ENCODE measurements at regions of chr10 and their contacts with region 1.

Region 1: DNA sequence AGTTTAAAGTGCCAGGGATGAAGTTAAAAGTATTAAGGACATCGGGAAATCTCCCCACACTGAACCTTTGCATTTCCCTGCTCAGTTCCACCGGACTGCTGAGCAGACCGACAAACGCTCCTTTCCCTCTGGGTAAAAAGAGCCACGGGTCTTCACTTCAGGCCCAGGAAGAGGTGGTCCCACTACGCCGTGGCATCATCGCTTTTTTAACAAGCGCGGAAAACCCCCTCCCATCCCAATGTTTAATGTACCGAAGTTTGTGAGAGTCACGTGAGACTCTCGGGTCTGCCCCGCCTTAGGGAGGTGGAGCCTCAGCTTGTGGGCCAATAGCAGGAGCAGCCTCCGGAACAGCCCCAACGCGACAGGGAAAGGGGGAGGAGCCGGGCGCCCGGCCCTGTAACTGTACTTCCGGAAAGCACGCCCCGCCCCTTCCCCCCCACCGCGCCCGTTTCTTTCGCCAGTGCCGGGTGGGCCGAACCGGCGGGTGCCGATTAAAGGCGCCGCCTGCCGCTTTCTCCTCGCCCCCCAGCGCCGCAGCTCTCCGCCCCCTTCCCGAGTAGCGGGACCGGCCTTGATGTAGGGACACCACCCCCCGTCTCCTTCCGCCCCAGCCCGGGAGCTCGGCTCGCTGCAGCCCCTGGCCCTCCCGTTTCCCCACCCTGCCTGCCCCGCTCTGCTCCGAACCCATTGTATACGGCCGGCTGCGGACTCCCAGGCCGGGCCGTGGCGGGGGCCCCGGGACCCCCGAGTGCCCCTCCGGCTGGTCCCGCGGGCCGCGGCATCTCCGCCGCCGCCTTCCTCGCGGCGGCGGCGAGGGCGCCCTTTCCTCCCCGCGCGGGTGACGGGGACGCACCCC is 2.2 kb upstream of the TRIM8 start:
- DNase-seq: peak; percentile 94
- ATAC-seq: peak; percentile 70
- H3K4me3 ChIP-seq: peak overlapping the region; percentile 69 to 85 (median 82)
- H3K27ac ChIP-seq: peak overlapping the region; percentile 95
- H3K4me1 ChIP-seq: peaks cover 16% of the 10 kb centered on the region
- H3K27me3 ChIP-seq: no peaks in the 10 kb centered on the region; a peak in 1 of 5 replicates
- CTCF ChIP-seq: peak; percentile 33; the same call in 1 of the 2 replicates
- EP300 ChIP-seq: peak in 1 of 2 experiments; percentile 56; a peak in 1 of 4 replicates
- POLR2A ChIP-seq: peak in 1 of 2 experiments; percentile 51; a peak in 2 of 4 replicates
- RAD21 ChIP-seq: 0 out of 2 replicates have a peak, but pooled peaks have one; percentile 18

Region 2: GRCh38 chr10:102503281-102504220 is 138.6 kb before region 1 on chr10 and contains the start of gene SUFU:
- CTCF ChIA-PET with region 1: interaction called, 5 read pairs
- POLR2A ChIA-PET with region 1: interaction called, 22 read pairs
- in situ Hi-C with region 1: no loop called
- intact Hi-C with region 1: loop called (anchors 5 kb)
- DNase-seq: peak; percentile 98
- ATAC-seq: peak; percentile 72
- H3K4me3 ChIP-seq: peak within 1 kb of the TSS; percentile 92 to 97 (median 96)
- H3K27ac ChIP-seq: peak within 1 kb of the TSS; percentile 75
- H3K4me1 ChIP-seq: peaks cover 49% of the 10 kb centered on the region
- H3K27me3 ChIP-seq: no peaks in the 10 kb centered on the region; a peak in 1 of 5 replicates
- CTCF ChIP-seq: peak; percentile 94
- EP300 ChIP-seq: no peak
- POLR2A ChIP-seq: peak; percentile 55 to 94
- RAD21 ChIP-seq: peak; percentile 69
- total RNA-seq, gene SUFU: 2.9 and 4.0 TPM in 2 replicates

Region 3: DNA sequence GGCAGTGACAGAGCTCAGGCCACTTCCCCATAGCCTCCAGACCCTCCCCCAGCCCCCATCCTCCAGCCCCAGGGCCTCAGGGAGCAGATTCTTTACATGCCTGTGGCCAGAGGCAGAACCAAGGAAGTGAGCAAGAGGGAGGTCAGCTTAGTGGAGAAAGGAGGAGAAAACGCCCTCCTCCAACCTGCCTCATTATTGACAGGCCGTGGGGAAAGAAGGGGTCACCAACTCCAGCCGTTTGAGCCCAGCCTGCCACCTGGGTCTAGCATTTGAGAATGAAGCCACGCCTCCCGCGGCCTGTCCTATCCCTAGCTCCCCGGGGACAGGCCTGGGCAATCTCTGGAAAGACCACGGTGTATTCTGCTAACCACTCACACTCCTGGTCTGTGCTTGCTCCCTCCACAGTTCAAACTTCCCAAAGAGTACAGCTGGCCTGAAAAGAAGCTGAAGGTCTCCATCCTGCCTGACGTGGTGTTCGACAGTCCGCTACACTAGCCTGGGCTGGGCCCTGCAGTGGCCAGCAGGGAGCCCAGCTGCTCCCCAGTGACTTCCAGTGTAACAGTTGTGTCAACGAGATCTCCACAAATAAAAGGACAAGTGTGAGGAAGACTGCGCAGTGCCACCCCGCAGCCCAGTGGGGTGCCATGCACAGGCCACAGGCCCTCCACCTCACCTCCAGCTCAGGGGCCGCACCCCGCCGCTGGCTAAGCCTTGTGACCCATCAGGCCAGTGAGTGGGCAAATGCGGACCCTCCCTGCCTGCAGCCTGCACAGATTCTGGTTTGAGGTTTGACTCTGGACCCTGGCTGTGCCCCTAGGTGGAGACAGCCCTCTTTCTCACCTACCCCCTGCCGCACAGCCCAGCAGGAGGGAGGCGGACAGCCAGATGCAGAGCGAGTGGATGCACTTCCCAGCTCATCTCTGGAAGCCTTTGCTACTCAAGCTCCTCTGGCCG is 12.2 kb before region 1 on chr10:
- CTCF ChIA-PET with region 1: no interaction called
- POLR2A ChIA-PET with region 1: interaction called, 121 read pairs
- in situ Hi-C with region 1: no loop called
- intact Hi-C with region 1: loop called (anchors 1 kb)
- DNase-seq: peak; percentile 60
- ATAC-seq: peak; percentile 64
- H3K4me3 ChIP-seq: no peak overlapping the region
- H3K27ac ChIP-seq: peak overlapping the region; percentile 53
- H3K4me1 ChIP-seq: peaks cover 86% of the 10 kb centered on the region
- H3K27me3 ChIP-seq: no peaks in the 10 kb centered on the region
- CTCF ChIP-seq: no peak
- EP300 ChIP-seq: peak in 1 of 2 experiments; percentile 18; a peak in 1 of 4 replicates
- POLR2A ChIP-seq: no peak
- RAD21 ChIP-seq: no peak

Region 4: GRCh38 chr10:102669206-102670064 is 27.3 kb after region 1 on chr10:
- CTCF ChIA-PET with region 1: no interaction called
- POLR2A ChIA-PET with region 1: interaction called, 17 read pairs
- in situ Hi-C with region 1: no loop called
- intact Hi-C with region 1: no loop called
- DNase-seq: peak; percentile 64
- ATAC-seq: peak; percentile 71
- H3K4me3 ChIP-seq: peak overlapping the region; percentile 35 to 62 (median 36); a peak in 4 of 6 replicates
- H3K27ac ChIP-seq: no peak overlapping the region
- H3K4me1 ChIP-seq: peaks cover 100% of the 10 kb centered on the region
- H3K27me3 ChIP-seq: no peaks in the 10 kb centered on the region
- CTCF ChIP-seq: peak; percentile 70
- EP300 ChIP-seq: no peak
- POLR2A ChIP-seq: no peak
- RAD21 ChIP-seq: peak; percentile 42; the same call in 1 of the 2 replicates

Region 5: DNA sequence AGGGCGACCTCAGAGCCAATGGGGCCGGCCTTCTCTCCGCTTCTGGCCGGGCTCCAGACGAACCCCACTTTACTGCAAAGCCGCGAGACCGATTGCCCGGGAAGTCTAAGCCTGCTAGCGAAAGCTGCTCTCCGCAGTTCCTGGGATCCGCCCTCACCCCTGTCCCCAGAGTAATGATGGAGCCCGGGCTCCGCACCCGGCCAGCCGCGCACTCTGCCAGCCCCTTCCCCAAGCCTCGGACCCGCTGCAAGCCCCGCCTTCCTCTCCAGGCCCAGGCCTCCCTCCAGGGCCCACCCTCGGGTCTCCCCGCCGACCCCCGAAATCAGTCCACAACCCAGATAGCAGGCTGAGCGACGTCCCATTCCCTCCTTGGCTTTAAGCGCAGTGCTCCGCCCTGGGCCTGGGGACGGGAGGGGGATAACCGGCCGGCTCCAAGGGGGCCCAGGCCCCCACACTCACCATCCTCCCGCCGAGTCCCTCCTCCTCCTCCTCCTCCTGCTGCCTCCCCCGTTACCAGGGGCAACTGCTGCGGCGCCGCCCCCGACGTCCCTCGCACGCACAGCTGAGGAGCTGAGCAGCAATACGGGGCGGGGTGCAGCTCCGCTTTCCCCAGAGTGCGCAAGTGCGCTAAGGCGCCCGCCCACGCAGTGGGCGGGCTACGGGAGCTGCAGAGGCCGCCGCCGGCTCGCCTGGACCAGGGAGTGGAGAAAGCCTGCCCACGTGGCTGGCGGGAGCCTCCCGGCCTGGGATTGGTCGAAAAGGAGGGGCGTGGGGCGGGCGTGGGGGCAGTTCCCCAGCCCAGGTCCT is 71.9 kb after region 1 on chr10 and contains the start of gene ARL3:
- CTCF ChIA-PET with region 1: no interaction called
- POLR2A ChIA-PET with region 1: interaction called, 21 read pairs
- in situ Hi-C with region 1: no loop called
- intact Hi-C with region 1: loop called (anchors 2 kb)
- DNase-seq: peak; percentile 95
- ATAC-seq: peak; percentile 92
- H3K4me3 ChIP-seq: peak within 1 kb of the TSS; percentile 90 to 96 (median 91)
- H3K27ac ChIP-seq: peak within 1 kb of the TSS; percentile 84
- H3K4me1 ChIP-seq: peaks cover 77% of the 10 kb centered on the region
- H3K27me3 ChIP-seq: no peaks in the 10 kb centered on the region; a peak in 1 of 5 replicates
- CTCF ChIP-seq: peak; percentile 38
- EP300 ChIP-seq: no peak
- POLR2A ChIP-seq: peak; percentile 45 to 69; a peak in 3 of 4 replicates
- RAD21 ChIP-seq: peak; percentile 41; the same call in 1 of the 2 replicates
- total RNA-seq, gene ARL3: 6.6 and 10.0 TPM in 2 replicates

Measured in HepG2 (cell line).